A673 (cell line): ENCODE measurements at regions of chr6 and their contacts with region 1.

Region 1: DNA sequence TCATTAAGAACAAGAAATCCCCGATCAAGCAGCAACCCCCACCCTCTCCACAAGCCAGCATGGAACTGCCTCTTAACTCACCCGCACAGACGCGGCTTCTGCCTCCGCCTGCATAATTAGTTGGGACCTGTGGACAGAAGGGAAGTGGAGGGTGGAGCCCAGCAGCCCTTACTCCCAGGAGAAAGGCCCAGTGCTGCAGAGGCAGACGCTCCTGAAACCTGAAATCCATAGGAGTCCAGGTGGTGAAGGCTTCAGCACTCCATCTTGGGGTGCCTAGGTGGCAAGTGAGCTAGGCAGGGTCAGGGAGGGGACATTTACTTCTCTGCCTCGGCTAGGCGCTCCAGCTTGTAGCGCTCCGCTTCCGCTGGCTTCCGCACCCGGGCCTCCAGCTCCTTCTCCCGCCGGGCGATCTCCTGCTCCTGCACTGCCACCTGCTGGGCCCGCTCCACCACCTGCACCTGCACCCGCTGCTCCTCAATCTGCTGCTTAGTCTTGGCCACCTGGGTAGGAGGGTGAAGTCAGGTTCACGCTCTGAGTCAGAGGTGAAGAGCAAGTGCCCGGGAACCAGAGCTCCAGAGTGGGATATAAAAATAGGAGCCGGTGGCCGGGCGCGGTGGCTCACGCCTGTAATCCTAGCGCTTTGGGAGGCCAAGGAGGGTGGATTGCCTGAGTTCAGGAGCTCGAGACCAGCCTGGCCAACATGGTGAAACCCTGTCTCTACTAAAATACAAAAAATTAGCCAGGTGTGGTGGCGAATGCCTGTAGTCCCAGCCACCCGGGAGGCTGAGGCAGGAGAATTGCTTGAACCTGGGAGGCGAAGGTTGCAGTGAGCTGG is 10.7 kb downstream of the TUBB start:
- DNase-seq: peak; percentile 69
- H3K4me3 ChIP-seq: no peak overlapping the region
- H3K27ac ChIP-seq: no peak overlapping the region
- H3K4me1 ChIP-seq: peaks cover 5% of the 10 kb centered on the region
- H3K27me3 ChIP-seq: no peaks in the 10 kb centered on the region
- CTCF ChIP-seq: peak; percentile 62

Region 2: DNA sequence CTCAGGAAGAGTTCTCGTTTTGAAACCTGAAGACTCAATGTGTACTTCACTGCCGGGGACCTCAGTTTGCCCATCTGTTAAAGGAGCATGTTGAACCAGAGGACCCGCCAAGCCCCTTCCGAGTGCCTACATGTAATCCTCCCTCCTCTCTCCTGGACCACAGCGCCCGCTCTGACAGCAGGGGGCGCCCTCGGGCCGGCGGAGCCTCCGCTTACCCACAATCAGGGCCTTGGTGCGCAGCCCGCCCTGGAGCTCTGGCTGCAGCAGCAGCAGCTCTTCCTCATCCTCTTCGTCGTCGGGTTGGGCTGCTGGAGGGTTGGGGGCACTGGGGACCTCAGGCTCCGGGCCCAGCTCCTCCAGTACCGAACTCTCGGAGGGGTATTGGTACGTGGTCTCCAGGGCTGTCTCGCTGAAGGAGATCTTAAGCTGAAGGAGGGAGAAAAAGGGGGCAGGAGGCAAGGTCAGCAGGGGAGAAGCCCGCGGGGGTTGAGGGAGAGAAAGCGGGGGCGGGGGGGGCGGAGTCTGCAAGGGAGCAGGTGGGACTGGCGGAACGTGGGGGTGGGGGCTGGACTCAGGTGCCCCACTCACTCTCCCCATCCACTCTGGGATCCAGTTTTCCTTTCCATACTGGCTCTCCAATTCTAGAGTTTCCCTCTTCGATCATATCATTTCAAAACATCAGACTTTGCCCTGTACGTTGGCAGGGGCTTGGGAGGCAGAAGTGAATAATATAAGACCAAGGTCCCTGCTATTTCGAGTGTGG is 51.7 kb before region 1 on chr6:
- CTCF ChIA-PET with region 1: interaction called, 30 read pairs
- POLR2A ChIA-PET with region 1: no interaction called
- intact Hi-C with region 1: no loop called
- DNase-seq: peak; percentile 89
- H3K4me3 ChIP-seq: no peak overlapping the region
- H3K27ac ChIP-seq: peak overlapping the region; percentile 43
- H3K4me1 ChIP-seq: peaks cover 23% of the 10 kb centered on the region
- H3K27me3 ChIP-seq: no peaks in the 10 kb centered on the region
- CTCF ChIP-seq: peak; percentile 97

Region 3: GRCh38 chr6:30862156-30862875 is 131.5 kb after region 1 on chr6:
- CTCF ChIA-PET with region 1: no interaction called
- POLR2A ChIA-PET with region 1: no interaction called
- intact Hi-C with region 1: no loop called
- DNase-seq: no peak
- H3K4me3 ChIP-seq: no peak overlapping the region
- H3K27ac ChIP-seq: no peak overlapping the region
- H3K4me1 ChIP-seq: no peaks in the 10 kb centered on the region
- H3K27me3 ChIP-seq: no peaks in the 10 kb centered on the region
- CTCF ChIP-seq: no peak

Region 4: DNA sequence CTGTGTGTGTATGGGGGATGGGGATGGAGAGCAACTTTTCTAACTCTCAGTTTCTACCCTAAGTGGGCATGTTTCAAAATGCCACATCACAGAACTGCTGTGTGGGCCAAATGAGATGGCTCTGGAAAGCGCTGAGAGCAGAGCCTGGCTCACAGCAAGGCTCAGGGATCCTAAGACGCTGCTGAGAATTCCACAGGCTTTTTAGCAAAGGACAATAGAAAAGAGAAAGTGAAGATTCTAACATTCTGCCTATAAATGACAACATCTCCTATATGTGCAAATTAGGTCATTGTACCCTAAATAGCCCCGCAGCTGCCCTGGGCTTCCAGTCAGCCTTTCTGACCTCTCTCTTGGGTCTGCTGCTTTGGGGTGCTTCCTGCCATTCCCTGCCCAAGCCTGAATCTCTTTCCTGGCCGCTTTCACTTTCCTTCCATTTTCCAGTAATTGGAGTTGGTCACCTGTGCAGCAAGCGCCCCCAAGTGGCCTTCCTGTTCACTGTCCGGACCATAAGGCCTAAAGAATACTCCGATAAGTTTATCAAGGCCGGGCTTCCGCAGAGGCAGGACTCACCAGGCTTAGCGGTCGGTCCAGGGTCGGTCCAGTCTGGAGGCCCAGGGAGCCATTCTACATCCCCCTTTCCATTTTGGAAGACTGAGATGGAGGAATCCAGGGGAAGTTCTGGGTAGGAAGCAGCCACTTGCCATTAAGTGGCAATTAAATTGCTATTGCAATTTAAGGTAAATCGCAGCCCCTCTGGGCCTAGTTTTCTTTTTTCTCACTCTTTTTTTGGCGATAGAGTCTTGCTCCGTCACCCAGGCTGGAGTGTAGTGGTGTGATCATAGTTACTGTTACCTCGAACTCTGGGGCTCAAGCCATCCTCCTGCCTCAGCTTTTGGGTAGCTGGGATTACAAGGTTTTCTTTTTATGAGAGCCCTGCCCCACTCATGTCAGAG is 146.9 kb after region 1 on chr6:
- CTCF ChIA-PET with region 1: no interaction called
- POLR2A ChIA-PET with region 1: no interaction called
- intact Hi-C with region 1: loop called (anchors 5 kb)
- DNase-seq: peak; percentile 88
- H3K4me3 ChIP-seq: peak overlapping the region; percentile 31
- H3K27ac ChIP-seq: no peak overlapping the region
- H3K4me1 ChIP-seq: peaks cover 3% of the 10 kb centered on the region
- H3K27me3 ChIP-seq: no peaks in the 10 kb centered on the region
- CTCF ChIP-seq: peak; percentile 93

Region 5: GRCh38 chr6:31042806-31043205 is 312.0 kb after region 1 on chr6:
- CTCF ChIA-PET with region 1: interaction called, 15 read pairs
- POLR2A ChIA-PET with region 1: no interaction called
- intact Hi-C with region 1: no loop called
- DNase-seq: peak; percentile 88
- H3K4me3 ChIP-seq: no peak overlapping the region
- H3K27ac ChIP-seq: no peak overlapping the region
- H3K4me1 ChIP-seq: no peaks in the 10 kb centered on the region
- H3K27me3 ChIP-seq: no peaks in the 10 kb centered on the region
- CTCF ChIP-seq: peak; percentile 76

Region 6: GRCh38 chr6:31568537-31568961 is 837.7 kb after region 1 on chr6:
- CTCF ChIA-PET with region 1: no interaction called
- POLR2A ChIA-PET with region 1: no interaction called
- intact Hi-C with region 1: no loop called
- DNase-seq: no peak
- H3K4me3 ChIP-seq: no peak overlapping the region
- H3K27ac ChIP-seq: no peak overlapping the region
- H3K4me1 ChIP-seq: no peaks in the 10 kb centered on the region
- H3K27me3 ChIP-seq: no peaks in the 10 kb centered on the region
- CTCF ChIP-seq: no peak